Prostate gland (tissue), 2 donors: ENCODE measurements at regions of chr15 and their contacts with region 1.

Region 1: DNA sequence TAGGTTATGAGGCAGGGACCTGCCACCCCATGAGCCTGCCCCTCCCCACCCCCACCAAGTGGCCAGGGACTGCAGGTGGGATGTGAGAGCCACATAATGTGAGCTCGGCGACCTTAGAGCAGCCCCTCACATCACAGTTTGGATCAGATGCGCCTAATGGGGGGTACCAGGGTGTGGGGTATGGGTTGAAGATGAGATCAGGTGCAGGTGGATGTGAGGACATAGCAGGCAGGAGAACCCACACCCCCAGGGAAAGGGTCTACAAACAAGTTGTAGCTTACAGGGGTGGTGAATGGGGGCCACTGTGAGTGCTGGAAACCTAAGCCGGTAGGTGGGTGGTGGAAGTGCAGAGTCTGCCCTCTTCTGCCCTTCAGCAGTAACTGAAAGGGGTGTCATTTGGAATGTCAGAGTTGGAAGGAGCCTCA is 94.0 kb downstream of the CORO2B start:
- DNase-seq: no peak
- H3K4me3 ChIP-seq: no peak overlapping the region
- H3K27ac ChIP-seq: no peak overlapping the region
- H3K4me1 ChIP-seq: no peaks in the 10 kb centered on the region
- H3K27me3 ChIP-seq: no peaks in the 10 kb centered on the region
- CTCF ChIP-seq: no peak
- POLR2A ChIP-seq: no peak

Region 2: GRCh38 chr15:68252925-68253534 is 419.8 kb before region 1 on chr15:
- intact Hi-C with region 1: loop called (anchors 10 kb)
- DNase-seq: peak; percentile 54
- H3K4me3 ChIP-seq: no peak overlapping the region
- H3K27ac ChIP-seq: no peak overlapping the region
- H3K4me1 ChIP-seq: no peaks in the 10 kb centered on the region
- H3K27me3 ChIP-seq: no peaks in the 10 kb centered on the region
- CTCF ChIP-seq: peak; percentile 30 to 90 (median 80)
- POLR2A ChIP-seq: no peak

Region 3: GRCh38 chr15:68304589-68305337 is 368.0 kb before region 1 on chr15:
- intact Hi-C with region 1: loop called (anchors 2 kb)
- DNase-seq: no peak
- H3K4me3 ChIP-seq: no peak overlapping the region
- H3K27ac ChIP-seq: no peak overlapping the region
- H3K4me1 ChIP-seq: no peaks in the 10 kb centered on the region
- H3K27me3 ChIP-seq: no peaks in the 10 kb centered on the region
- CTCF ChIP-seq: no peak
- POLR2A ChIP-seq: no peak

Region 4: DNA sequence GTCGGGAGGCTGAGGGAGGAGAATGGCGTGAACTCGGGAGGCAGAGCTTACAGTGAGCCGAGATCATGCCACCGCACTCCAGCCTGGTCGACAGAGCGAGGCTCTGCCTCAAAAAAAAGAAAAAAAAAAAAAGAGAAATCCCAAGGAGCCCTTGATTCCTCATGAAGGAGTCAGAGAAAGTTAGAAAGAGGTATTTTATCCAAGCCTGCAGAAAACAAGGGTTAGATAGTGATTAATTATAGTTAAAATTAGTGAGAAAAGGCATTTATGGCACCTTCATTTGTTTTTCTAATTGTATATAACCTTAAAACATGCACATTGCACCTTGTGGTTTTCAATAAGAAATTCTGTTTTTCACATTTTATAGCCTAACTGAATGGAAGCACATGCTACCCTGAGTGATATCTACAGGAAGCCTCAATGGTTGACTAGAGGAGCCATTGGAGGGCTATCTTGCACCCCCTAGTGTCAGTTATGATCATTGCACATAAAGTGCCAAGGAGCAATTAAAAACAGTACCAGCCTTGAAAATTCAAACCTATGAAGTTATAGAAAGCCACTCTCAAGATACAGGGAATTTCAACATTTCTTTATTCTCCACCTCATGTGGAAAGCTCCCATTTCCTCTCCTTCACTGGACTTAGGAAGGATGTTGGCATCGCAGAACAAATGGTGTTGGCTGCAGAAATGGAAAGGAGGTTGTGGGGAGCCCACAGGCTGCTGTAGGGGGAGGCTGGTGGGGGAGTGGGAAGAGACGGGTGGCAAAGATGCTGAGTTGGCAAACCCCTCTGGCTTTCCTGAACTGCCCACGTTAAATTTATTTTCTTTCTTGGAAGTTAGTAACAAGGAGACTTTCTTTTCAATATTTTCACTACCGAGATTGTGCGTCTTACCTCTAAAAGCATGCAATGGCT is 289.4 kb before region 1 on chr15:
- intact Hi-C with region 1: loop called (anchors 10 kb)
- DNase-seq: peak; percentile 44
- H3K4me3 ChIP-seq: no peak overlapping the region
- H3K27ac ChIP-seq: peak overlapping the region in 1 of 2 donors; percentile 33
- H3K4me1 ChIP-seq: no peaks in the 10 kb centered on the region
- H3K27me3 ChIP-seq: no peaks in the 10 kb centered on the region
- CTCF ChIP-seq: peak; percentile 61 to 80 (median 70)
- POLR2A ChIP-seq: no peak

Region 5: GRCh38 chr15:68559345-68560310 is 113.2 kb before region 1 on chr15:
- intact Hi-C with region 1: loop called (anchors 2 kb)
- DNase-seq: peak; percentile 47
- H3K4me3 ChIP-seq: peak overlapping the region; percentile 15 to 25
- H3K27ac ChIP-seq: no peak overlapping the region
- H3K4me1 ChIP-seq: no peaks in the 10 kb centered on the region
- H3K27me3 ChIP-seq: no peaks in the 10 kb centered on the region
- CTCF ChIP-seq: peak; percentile 90 to 97 (median 92)
- POLR2A ChIP-seq: no peak